ENCODE measurements at regions of chr11 and their contacts with region 1.

Region 1: GRCh38 chr11:131674051-131674755 is 303.8 kb downstream of the NTM start:
- DNase-seq: peak; percentile 73
- ATAC-seq: peak; percentile 91 to 93
- H3K4me3 ChIP-seq: no peak overlapping the region
- H3K27ac ChIP-seq: no peak overlapping the region
- H3K4me1 ChIP-seq: no peaks in the 10 kb centered on the region
- H3K27me3 ChIP-seq: no peaks in the 10 kb centered on the region
- CTCF ChIP-seq: peak; percentile 94

Region 2: DNA sequence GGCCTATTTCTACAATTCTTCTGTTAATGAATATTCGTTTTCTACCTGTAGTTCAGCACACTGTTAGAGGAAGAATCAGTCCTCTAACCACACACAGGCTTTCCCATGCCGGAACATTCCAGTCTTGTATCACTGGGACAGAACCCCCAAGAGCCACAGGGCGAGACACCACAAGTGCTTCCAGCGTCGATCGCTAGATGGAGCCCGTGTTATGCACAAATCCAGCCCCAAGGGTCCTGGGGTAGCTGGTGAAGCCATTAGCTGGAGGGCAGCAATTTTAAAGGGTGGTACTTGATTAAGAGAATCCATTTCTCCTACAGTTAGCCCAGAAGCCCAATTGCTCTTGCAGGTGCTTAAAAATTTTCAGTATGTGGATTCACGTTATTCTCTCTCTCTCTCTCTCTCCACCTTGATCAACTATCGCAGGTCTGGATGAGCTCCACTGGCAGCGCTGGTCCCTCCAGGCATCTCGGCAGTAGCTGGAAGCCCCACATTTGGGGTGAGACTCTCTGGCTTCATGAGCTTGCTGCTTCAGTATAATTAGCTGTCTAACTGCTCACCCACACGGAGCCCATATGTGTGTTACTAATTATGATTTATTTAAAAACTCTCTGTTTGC is 609.7 kb before region 1 on chr11:
- intact Hi-C with region 1: loop called (anchors 10 kb)
- DNase-seq: no peak
- ATAC-seq: peak; percentile 53 to 85
- H3K4me3 ChIP-seq: no peak overlapping the region
- H3K27ac ChIP-seq: no peak overlapping the region
- H3K4me1 ChIP-seq: no peaks in the 10 kb centered on the region
- H3K27me3 ChIP-seq: peaks cover 5% of the 10 kb centered on the region
- CTCF ChIP-seq: peak; percentile 73